Activated CD8-positive, alpha-beta memory T cell treated with anti-CD3 and anti-CD28 coated beads, Interleukin-2, amount 10 ng/mL, durations not matched to agents 7 days and 5 days (primary cell): ENCODE measurements at regions of chr6 and their contacts with region 1.

Region 1: GRCh38 chr6:29752451-29753308 is 29.4 kb downstream of the HLA-F start:
- DNase-seq: peak; percentile 91
- ATAC-seq: peak; percentile 70
- H3K4me3 Mint-ChIP-seq: peak overlapping the region; percentile 85
- H3K27ac Mint-ChIP-seq: peak overlapping the region; percentile 94
- H3K4me1 Mint-ChIP-seq: peaks cover 48% of the 10 kb centered on the region
- H3K27me3 Mint-ChIP-seq: no peaks in the 10 kb centered on the region

Region 2: DNA sequence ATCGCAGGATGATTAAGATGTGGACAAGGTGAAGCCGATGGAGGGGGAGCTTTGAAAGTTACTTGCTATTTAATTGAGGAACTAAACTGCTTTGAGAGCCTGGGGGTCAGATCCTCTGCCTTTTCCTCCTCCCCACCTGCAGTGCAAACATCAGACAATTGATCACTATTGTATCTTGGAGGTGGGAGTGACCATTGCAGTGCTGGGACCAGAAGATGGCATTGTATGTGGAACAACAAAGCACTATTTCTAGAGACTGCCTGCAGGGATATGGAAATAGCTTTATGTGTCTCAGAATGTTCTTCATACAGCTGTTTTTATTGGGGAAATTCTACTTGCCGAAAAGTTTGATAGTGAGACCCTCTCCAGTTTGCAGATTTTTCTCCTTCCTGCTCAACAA is 91.6 kb before region 1 on chr6:
- CTCF ChIA-PET with region 1: no interaction called
- DNase-seq: no peak
- ATAC-seq: no peak
- H3K4me3 Mint-ChIP-seq: no peak overlapping the region
- H3K27ac Mint-ChIP-seq: no peak overlapping the region
- H3K4me1 Mint-ChIP-seq: no peaks in the 10 kb centered on the region
- H3K27me3 Mint-ChIP-seq: peaks cover 27% of the 10 kb centered on the region

Region 3: DNA sequence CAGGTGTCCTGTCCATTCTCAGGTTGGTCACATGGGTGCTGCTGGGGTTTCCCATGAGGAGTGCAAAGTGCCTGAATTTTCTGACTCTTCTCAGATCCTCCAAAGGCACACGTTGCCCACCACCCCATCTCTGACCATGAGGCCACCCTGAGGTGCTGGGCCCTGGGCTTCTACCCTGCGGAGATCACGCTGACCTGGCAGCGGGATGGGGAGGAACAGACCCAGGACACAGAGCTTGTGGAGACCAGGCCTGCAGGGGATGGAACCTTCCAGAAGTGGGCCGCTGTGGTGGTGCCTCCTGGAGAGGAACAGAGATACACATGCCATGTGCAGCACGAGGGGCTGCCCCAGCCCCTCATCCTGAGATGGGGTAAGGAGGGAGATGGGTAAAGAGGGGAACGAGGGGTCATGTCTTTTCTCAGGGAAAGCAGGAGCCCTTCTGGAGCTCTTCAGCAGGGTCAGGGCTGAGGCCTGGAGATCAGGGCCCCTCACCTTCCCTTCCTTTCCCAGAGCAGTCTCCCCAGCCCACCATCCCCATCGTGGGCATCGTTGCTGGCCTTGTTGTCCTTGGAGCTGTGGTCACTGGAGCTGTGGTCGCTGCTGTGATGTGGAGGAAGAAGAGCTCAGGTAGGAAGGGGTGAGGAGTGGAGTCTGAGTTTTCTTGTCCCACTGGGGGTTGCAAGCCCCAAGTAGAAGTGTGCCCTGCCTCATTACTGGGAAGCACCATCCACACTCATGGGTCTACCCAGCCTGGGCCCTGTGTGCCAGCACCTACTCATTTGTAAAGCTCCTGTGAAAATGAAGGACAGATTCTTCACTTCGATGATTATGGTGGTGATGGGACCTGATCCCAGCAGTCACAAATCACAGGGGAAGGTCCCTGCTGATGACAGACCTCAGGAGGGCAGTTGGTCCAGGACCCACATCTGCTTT is 27.5 kb before region 1 on chr6:
- CTCF ChIA-PET with region 1: interaction called, 10 read pairs
- DNase-seq: no peak
- ATAC-seq: no peak
- H3K4me3 Mint-ChIP-seq: peak overlapping the region; percentile 98
- H3K27ac Mint-ChIP-seq: peak overlapping the region; percentile 93
- H3K4me1 Mint-ChIP-seq: peaks cover 55% of the 10 kb centered on the region
- H3K27me3 Mint-ChIP-seq: no peaks in the 10 kb centered on the region

Region 4: GRCh38 chr6:29763491-29764289 is 11.0 kb after region 1 on chr6:
- CTCF ChIA-PET with region 1: interaction called, 15 read pairs
- DNase-seq: peak; percentile 55
- ATAC-seq: peak; percentile 86
- H3K4me3 Mint-ChIP-seq: no peak overlapping the region
- H3K27ac Mint-ChIP-seq: peak overlapping the region; percentile 63
- H3K4me1 Mint-ChIP-seq: peaks cover 44% of the 10 kb centered on the region
- H3K27me3 Mint-ChIP-seq: peaks cover 2% of the 10 kb centered on the region

Region 5: DNA sequence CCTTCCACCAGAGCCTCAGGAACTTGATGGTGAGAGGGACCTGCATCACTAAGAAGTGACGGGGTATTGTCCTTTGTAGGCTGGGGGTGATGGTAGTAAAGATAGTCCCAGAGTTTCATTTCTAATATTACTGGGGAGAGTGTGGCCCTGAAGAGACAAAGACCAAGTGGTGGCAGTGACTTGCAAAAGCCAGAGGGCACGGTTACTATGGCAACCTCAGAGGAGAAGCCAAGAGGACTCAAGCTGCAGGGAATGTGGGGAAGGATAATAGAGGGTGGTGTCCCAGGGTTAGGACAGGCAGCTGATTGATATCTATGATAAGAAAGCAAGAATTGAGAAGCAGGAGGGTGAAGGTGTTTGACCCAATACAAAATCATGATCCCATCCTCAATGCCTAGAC is 117.4 kb after region 1 on chr6:
- CTCF ChIA-PET with region 1: no interaction called
- DNase-seq: no peak
- ATAC-seq: no peak
- H3K4me3 Mint-ChIP-seq: no peak overlapping the region
- H3K27ac Mint-ChIP-seq: no peak overlapping the region
- H3K4me1 Mint-ChIP-seq: no peaks in the 10 kb centered on the region
- H3K27me3 Mint-ChIP-seq: peaks cover 34% of the 10 kb centered on the region

Region 6: GRCh38 chr6:29887819-29888776 is 135.4 kb after region 1 on chr6:
- CTCF ChIA-PET with region 1: no interaction called
- DNase-seq: peak; percentile 89
- ATAC-seq: peak; percentile 91
- H3K4me3 Mint-ChIP-seq: peak overlapping the region; percentile 78
- H3K27ac Mint-ChIP-seq: peak overlapping the region; percentile 84
- H3K4me1 Mint-ChIP-seq: peaks cover 9% of the 10 kb centered on the region
- H3K27me3 Mint-ChIP-seq: no peaks in the 10 kb centered on the region